ENCODE measurements at regions of chr6 and their contacts with region 1.

Region 1: GRCh38 chr6:160992061-160992979 is 751 bp downstream of the MAP3K4 start:
- DNase-seq: no peak
- H3K4me3 ChIP-seq: peak overlapping the region; percentile 81 to 85
- H3K27ac ChIP-seq: peak overlapping the region; percentile 90 to 95
- H3K4me1 ChIP-seq: peaks cover 2 to 11% of the 10 kb centered on the region in 2 donors
- H3K27me3 ChIP-seq: no peaks in the 10 kb centered on the region
- CTCF ChIP-seq: peak; percentile 29 to 60 (median 53)

Region 2: GRCh38 chr6:160949531-160949930 is 42.8 kb before region 1 on chr6:
- intact Hi-C with region 1: loop called (anchors 1 kb)
- DNase-seq: no peak
- H3K4me3 ChIP-seq: no peak overlapping the region
- H3K27ac ChIP-seq: peak overlapping the region; percentile 68 to 72
- H3K4me1 ChIP-seq: peaks cover 0 to 5% of the 10 kb centered on the region in 2 donors
- H3K27me3 ChIP-seq: no peaks in the 10 kb centered on the region
- CTCF ChIP-seq: no peak